Right ventricle myocardium inferior (tissue), 1 donor: ENCODE measurements at regions of chr14 and their contacts with region 1.

Region 1: GRCh38 chr14:100662879-100663760 is 63.6 kb upstream of the DLK1 start:
- DNase-seq: peak; percentile 86
- ATAC-seq: no peak

Region 2: DNA sequence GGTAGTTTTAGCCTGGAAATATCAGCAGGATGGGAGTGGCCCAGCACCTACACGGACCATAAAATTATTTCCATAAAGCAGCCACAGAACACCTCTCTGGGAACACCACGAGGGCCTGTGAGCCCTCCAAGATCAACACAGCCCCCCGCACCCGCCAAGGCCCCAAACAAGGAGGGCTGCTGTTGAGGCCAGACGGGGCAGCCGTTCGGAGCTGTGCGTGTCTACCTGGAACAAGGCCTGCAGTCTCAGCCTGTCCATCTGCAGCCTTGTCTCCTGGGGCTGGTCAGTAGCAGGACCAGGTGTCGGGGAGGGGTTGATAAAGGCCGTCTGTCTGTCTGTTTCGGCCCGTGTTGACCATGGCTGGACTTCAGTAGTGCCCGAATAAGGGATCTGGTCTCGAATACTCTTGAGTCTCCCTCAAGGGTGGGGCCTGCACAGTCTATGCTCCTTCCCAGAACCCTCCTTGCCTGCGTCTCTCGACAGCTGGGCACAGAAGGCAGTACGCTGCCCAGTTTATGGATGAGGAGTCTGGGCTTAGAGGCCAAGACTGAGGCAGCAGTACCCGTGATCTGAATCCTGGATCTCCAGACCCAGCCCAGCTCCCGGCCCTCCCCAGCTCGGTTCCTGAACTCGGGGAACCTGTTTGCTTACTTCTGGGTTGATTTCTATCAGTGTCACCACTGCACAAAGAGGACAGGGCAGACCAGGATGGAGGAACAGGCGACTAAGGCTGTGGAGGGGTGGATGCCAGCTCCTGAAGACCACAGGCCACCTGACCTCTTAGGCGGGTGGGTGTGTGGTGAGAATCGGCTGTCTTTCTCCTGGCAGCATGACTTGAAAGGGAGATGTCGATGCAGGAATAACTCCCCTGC is 40.5 kb after region 1 on chr14:
- intact Hi-C with region 1: no loop called
- DNase-seq: peak; percentile 63
- ATAC-seq: peak; percentile 59

Region 3: DNA sequence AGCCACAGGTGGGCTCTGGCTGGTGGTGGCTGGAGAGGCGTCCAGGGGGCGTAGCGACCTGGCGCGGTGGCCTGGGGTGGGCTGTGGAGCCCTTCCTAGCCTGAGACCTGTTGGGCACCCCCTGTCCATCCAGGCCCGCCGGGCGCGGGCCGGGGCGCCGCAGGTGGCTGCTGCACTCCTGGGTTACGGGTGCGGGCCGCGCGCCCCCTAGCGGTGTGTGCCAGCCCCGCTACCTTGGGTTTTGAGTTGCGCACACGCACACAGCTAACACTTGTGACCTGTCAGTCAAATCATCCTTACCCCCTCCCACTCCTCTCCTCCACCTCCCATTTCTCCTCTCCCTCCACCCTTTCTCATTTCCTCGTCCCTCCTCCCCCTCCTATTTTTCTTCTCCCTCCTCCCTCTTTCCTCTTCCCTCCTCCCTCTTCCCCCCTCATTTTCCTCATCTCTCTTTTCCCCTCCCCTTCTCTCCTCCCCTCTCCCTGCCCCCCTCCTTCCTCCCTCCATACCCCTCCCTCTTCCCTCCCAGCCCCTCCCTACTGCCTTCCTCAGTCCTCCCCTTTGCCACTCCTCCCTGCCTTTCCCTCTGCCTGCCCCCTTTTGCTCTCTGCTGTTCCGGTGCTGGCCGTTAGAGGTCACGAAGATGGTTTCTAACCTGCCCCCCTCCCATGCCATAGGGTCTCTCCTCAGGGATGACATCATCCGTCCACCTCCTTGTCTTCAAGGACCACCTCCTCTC is 165.1 kb after region 1 on chr14:
- intact Hi-C with region 1: loop called (anchors 10 kb)
- DNase-seq: peak; percentile 39
- ATAC-seq: peak; percentile 47

Region 4: GRCh38 chr14:101230161-101230850 is 567.2 kb after region 1 on chr14:
- intact Hi-C with region 1: loop called (anchors 5 kb)
- DNase-seq: no peak
- ATAC-seq: no peak

Region 5: DNA sequence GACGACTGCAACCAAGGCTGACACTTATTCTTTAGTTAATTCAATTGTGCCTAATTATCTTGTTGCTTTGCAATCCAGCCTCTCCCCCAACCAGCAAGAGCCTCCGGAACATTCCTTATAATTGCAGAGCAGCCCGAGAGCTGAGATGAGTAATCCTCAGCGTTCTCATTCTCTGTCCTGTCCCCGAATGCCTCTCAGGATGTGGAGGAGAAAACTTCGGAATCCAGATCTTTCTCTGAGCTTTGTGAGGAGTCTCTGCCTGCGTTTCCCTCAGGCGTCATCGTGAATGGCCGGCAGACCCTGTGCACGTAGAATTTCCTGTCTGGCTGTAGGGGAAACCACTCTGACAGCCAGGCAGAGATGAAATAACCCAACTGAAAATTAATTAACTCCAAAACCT is 737.7 kb after region 1 on chr14:
- intact Hi-C with region 1: no loop called
- DNase-seq: no peak
- ATAC-seq: peak; percentile 43

Region 6: DNA sequence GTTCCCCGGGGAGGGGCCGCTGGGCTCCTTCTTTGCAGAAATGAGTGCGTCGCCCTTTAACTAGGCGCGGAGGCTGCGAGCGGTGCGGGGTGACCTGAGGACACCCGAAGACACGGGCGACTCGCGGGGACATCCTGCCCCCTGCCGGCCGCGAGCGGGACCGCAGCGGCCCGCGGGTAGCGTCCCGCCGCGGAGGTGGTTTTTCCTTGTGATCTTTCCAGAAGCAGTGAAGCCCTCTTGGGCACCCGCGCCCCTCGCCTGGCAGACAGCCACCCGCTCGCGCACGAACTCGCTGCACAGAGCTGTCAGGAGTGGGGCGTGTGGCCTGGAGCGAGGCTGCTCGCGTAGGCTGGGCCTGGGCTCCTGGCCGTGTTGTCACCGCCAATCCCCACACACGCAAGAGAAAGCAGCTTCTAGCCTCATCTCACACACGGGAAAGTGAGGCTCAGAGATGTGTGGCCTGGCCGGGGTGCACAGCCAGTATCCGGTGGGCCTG is 965.4 kb after region 1 on chr14:
- intact Hi-C with region 1: loop called (anchors 2 kb)
- DNase-seq: peak; percentile 90
- ATAC-seq: peak; percentile 90